Activated T-helper 2 cell treated with anti-CD3 and anti-CD28 coated beads, Interferon-gamma antibody, Interleukin-2, Interleukin-4, amounts not matched to agents 10 μg/mL and 5 μg/mL and 100 μg/mL, durations not matched to agents 14 hours and 24 hours and 36 hours (primary cell): ENCODE measurements at regions of chr10 and their contacts with region 1.

Region 1: GRCh38 chr10:88835096-88835909 is 16.3 kb downstream of the ANKRD22 start:
- DNase-seq: peak; percentile 78
- H3K4me3 Mint-ChIP-seq: no peak overlapping the region
- H3K27ac Mint-ChIP-seq: no peak overlapping the region
- H3K4me1 Mint-ChIP-seq: peaks cover 35% of the 10 kb centered on the region
- H3K27me3 Mint-ChIP-seq: no peaks in the 10 kb centered on the region

Region 2: DNA sequence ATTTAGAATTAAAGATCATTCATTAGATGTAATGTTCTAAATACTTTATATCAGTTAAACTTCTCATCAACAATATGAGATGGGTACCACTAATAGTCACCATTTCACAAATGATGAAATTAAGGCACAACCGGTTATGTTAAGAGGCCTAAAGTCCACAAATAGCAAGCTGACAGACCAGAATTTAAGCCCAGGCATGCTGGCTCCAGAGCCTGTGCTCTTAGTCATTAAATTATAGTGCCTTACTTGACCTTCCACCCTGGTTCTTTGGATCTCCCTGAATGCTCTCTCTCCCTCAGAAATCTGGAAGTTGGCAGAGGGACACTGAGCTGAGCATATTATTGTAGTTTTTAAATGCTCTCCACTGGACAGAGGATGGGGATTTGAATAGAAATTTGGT is 71.9 kb before region 1 on chr10:
- intact Hi-C with region 1: no loop called
- DNase-seq: no peak
- H3K4me3 Mint-ChIP-seq: no peak overlapping the region
- H3K27ac Mint-ChIP-seq: no peak overlapping the region
- H3K4me1 Mint-ChIP-seq: peaks cover 14% of the 10 kb centered on the region
- H3K27me3 Mint-ChIP-seq: peaks cover 51% of the 10 kb centered on the region

Region 3: GRCh38 chr10:88810196-88810961 is 24.9 kb before region 1 on chr10:
- intact Hi-C with region 1: loop called (anchors 2 kb)
- DNase-seq: no peak
- H3K4me3 Mint-ChIP-seq: no peak overlapping the region
- H3K27ac Mint-ChIP-seq: no peak overlapping the region
- H3K4me1 Mint-ChIP-seq: peaks cover 28% of the 10 kb centered on the region
- H3K27me3 Mint-ChIP-seq: peaks cover 14% of the 10 kb centered on the region

Region 4: DNA sequence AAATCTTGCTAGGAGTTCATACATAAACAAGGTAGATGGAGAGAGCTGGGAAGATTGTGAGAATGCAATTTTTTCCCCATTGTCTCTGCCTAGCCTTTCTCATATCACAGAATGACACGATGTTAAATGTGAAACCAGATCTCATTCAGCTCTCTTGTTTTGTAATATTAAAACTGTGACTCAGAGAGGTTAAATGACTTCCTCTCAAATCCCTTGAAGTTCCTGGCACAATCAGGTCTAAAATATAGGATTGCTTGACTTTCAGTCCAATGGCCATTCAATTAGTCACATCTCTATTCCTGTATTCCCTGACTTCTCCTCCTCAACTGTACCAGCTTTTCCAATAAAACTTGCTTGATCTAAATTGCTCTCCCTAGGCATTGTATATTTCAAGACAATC is 13.2 kb after region 1 on chr10:
- intact Hi-C with region 1: loop called (anchors 1 kb)
- DNase-seq: no peak
- H3K4me3 Mint-ChIP-seq: no peak overlapping the region
- H3K27ac Mint-ChIP-seq: peak overlapping the region; percentile 60
- H3K4me1 Mint-ChIP-seq: peaks cover 27% of the 10 kb centered on the region
- H3K27me3 Mint-ChIP-seq: peaks cover 4% of the 10 kb centered on the region

Region 5: DNA sequence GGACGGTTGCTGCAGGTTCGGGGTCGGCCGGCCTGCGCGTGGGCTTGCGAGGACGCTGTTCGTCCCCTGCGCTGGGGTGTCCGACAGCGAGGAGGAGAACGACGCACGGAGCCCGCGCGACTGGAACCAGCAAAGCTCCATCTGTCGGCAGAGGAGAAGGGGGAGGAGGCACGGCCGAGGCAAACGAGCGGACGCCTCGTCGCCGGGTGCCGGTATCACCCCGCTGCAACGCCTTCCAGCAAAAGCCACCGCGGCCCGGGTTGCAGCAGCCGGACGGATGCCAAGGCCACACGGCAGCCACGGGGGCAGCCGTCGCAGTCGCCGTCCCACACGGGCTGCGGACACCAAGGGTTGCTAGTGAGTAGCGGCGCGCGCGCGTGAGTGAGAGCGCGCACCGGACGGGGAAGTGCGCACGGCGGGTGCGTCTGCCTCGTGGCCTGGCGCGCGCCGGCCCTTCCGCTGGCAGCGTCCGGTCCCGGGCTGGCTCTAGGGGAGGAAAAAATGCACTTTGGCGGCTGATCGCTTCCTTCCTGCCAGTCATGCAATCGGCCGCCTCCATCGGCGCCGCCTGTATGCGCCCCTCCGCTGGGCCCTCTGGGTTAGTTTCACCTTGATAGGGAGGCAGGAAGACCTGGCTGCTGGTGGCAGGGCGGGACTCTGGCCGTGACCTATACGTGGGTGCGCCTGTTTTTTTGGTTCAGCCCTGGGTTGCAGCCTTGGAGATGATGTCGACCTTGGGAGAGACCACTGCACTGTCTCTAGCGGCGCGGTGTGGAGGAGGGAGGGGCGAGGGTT is 45.2 kb after region 1 on chr10:
- intact Hi-C with region 1: loop called (anchors 2 kb)
- DNase-seq: peak; percentile 79
- H3K4me3 Mint-ChIP-seq: peak overlapping the region; percentile 97
- H3K27ac Mint-ChIP-seq: peak overlapping the region; percentile 98
- H3K4me1 Mint-ChIP-seq: peaks cover 59% of the 10 kb centered on the region
- H3K27me3 Mint-ChIP-seq: no peaks in the 10 kb centered on the region

Region 6: DNA sequence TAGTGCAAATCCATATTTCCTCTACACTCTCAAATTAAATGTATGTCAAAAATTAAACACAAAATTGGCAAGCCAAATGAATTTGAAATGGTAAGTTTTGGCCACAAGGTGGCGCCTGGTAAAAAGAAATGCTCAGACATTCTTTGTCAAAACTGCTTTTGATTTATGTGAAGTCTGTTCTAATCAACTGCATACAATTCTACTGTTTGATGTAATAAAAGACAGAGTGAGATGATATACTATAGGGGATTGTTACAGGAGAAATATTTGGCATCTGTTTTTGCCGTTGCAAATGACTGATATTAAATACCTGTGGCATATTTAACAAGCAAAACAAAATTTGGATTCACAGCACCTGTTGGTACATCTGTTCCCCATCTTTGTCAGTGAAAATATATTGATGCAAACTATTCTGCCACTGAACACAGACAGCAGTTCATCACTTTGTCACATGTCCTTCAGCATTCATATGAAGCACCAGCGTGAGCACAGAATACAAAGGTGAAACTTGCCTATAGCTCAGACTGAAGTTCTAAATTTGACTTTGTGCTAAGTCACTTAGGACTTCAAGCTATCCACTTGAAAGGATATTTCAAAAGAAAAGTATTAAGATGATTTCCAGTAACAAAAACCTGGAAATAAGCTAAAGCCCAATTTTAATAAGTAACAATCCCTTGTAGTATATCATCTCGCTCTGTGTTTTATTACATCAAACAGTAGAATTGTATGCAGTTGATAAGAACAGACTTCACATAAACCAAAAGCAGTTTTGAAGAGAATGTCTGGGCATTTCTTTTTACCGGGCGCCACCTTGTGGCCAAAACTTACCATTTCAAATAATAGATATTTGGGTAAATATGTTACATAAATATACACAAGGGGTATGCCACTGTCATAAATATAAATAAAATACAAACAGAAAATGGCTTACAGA is 382.0 kb after region 1 on chr10:
- intact Hi-C with region 1: loop called (anchors 5 kb)
- DNase-seq: peak; percentile 27
- H3K4me3 Mint-ChIP-seq: no peak overlapping the region
- H3K27ac Mint-ChIP-seq: no peak overlapping the region
- H3K4me1 Mint-ChIP-seq: peaks cover 6% of the 10 kb centered on the region
- H3K27me3 Mint-ChIP-seq: peaks cover 1% of the 10 kb centered on the region